ENCODE measurements at regions of chr19 and their contacts with region 1.

Region 1: GRCh38 chr19:7919610-7920518 is at the start of gene SNAPC2:
- DNase-seq: peak; percentile 98
- H3K4me3 Mint-ChIP-seq: peak within 1 kb of the TSS; percentile 82
- H3K27ac Mint-ChIP-seq: peak within 1 kb of the TSS; percentile 81
- H3K4me1 Mint-ChIP-seq: peaks cover 43% of the 10 kb centered on the region
- H3K27me3 Mint-ChIP-seq: peaks cover 27% of the 10 kb centered on the region
- total RNA-seq, gene SNAPC2: 20.4 to 24.1 TPM

Region 2: DNA sequence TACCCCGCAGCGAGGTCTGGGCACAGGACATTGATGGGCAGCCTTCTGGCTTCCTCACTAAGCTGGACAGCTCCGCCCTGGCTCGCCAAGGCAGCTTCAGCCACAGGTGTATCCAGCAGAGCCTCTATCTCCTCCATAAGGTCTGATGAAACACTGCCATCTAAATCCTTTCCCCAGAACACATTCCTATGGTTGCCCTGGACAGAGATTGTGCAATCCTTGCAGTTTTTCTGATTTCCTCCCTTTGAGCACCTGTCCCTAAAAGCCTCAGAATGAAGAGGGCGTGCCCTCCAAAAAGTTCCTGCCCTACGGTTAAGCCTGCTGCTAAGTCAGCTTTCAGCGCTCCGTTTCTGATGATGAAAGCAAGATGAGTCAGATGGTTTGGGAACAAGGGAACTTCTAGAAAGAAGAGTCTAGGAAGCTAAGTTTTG is 135.9 kb before region 1 on chr19:
- CTCF ChIA-PET with region 1: no interaction called
- POLR2A ChIA-PET with region 1: no interaction called
- DNase-seq: no peak
- H3K4me3 Mint-ChIP-seq: no peak overlapping the region
- H3K27ac Mint-ChIP-seq: no peak overlapping the region
- H3K4me1 Mint-ChIP-seq: no peaks in the 10 kb centered on the region
- H3K27me3 Mint-ChIP-seq: peaks cover 38% of the 10 kb centered on the region

Region 3: DNA sequence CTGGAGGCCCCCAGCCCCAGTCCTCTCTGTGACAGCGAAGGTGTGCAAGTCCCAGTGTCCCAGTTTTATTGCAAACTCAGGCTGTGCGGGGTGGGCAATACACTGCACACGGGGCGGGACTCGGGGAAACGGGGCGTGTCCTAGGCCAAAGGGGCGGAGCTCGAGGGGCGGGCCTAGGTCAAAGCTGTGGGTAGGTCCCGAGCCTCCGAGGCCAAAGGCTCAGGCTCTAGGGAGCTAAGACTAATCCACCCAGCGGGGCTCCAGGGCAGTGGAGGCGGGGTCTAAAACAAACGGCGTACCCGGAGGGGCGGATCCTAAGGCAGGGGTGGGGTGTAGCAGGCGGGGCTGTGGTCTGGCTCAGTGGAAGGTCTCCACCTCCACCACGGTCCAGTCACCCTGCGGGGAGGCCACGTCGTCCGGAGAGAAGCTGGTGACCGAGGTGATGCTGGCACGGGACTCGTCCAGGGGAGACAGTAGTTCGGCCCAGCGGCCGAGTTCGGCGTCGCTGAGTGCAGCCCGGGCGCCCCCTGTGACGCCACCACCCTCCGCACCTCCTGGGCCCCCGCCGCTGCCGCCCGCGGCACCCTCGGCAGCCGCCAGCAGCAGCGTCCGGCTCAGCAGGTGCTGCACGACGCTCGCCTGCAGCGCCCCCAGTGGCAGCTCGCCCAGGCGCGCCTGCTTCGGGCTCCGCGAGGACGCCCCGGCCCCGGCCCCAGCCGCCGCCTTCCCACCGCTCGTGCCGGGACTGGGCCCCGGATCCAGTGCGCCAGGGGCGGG is 51.0 kb before region 1 on chr19:
- CTCF ChIA-PET with region 1: interaction called, 26 read pairs
- POLR2A ChIA-PET with region 1: interaction called, 5 read pairs
- DNase-seq: peak; percentile 82
- H3K4me3 Mint-ChIP-seq: peak overlapping the region; percentile 60
- H3K27ac Mint-ChIP-seq: no peak overlapping the region
- H3K4me1 Mint-ChIP-seq: peaks cover 44% of the 10 kb centered on the region
- H3K27me3 Mint-ChIP-seq: peaks cover 50% of the 10 kb centered on the region

Region 4: DNA sequence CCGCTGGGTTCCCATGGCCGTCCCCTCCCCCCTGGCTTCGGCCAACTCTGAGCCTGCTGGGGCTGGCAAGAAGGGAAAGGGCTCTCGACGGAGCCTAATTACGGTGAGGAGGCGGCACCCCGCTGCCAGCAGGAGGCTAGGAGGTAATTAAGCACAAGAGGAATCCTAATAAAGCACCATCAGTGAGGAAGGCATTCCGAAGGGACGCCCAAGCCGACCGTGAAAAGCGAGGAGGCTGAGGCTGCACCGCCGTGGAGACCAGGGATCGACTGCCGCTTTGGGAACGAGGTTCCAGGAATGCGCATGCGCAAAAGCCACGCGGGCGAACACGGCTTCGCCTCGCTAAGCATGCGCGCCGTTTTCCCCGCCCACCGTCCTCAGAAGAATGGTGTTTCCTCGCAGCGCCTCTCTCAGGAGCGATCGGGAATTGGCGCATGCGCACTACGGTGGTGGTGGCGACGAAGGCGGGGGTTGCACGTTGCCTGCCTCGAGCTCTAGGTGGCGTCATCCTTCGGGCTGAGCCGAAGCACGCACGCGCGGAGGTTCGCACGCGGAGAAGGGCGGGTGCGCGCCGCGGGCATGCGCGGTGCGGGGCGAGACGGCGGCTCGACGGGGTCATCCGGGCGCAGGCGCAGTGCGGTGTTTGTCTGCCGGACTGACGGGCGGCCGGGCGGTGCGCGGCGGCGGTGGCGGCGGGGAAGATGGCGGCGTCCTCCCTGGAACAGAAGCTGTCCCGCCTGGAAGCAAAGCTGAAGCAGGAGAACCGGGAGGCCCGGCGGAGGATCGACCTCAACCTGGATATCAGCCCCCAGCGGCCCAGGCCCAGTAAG is 16.4 kb before region 1 on chr19 and contains the start of gene MAP2K7:
- CTCF ChIA-PET with region 1: interaction called, 23 read pairs
- POLR2A ChIA-PET with region 1: interaction called, 25 read pairs
- DNase-seq: peak; percentile 100
- H3K4me3 Mint-ChIP-seq: peak within 1 kb of the TSS; percentile 85
- H3K27ac Mint-ChIP-seq: peak within 1 kb of the TSS; percentile 89
- H3K4me1 Mint-ChIP-seq: peaks cover 30% of the 10 kb centered on the region
- H3K27me3 Mint-ChIP-seq: no peaks in the 10 kb centered on the region
- total RNA-seq, gene MAP2K7: 42.6 to 42.9 TPM

Region 5: GRCh38 chr19:7908742-7909461 is 11.0 kb before region 1 on chr19:
- CTCF ChIA-PET with region 1: interaction called, 23 read pairs
- POLR2A ChIA-PET with region 1: interaction called, 25 read pairs
- DNase-seq: no peak
- H3K4me3 Mint-ChIP-seq: no peak overlapping the region
- H3K27ac Mint-ChIP-seq: no peak overlapping the region
- H3K4me1 Mint-ChIP-seq: peaks cover 18% of the 10 kb centered on the region
- H3K27me3 Mint-ChIP-seq: no peaks in the 10 kb centered on the region

Measured in activated CD4-positive, alpha-beta memory T cell treated with anti-CD3 and anti-CD28 coated beads, Interleukin-2, amount 10 ng/mL, durations not matched to agents 7 days and 5 days (primary cell).